Right cardiac atrium (tissue), 5 donors: ENCODE measurements at regions of chr9 and their contacts with region 1.

Region 1: DNA sequence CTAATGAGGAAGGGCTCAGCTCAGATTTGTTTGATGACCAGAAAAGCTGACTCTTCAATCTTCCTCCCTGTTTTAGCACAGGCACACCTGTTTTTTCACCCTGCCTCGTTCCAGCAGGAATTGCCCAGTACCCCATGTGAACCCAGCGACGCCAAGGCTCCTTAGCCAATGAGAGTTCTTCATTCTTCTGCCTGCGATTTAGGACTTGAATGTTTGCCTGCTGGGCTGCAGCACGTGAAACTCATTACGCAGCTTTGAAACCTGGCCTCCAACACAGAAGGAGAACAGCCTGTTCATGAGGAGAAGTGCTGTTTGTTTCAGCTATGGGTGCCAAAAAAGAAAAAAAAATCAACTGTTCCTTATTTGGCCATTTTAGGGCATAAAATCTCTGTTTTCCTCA is 315.5 kb downstream of the TRPM3 start:
- DNase-seq: no peak
- ATAC-seq: no peak
- H3K4me3 ChIP-seq: no peak overlapping the region
- H3K27ac ChIP-seq: no peak overlapping the region
- H3K4me1 ChIP-seq: no peaks in the 10 kb centered on the region
- H3K27me3 ChIP-seq: no peaks in the 10 kb centered on the region

Region 2: DNA sequence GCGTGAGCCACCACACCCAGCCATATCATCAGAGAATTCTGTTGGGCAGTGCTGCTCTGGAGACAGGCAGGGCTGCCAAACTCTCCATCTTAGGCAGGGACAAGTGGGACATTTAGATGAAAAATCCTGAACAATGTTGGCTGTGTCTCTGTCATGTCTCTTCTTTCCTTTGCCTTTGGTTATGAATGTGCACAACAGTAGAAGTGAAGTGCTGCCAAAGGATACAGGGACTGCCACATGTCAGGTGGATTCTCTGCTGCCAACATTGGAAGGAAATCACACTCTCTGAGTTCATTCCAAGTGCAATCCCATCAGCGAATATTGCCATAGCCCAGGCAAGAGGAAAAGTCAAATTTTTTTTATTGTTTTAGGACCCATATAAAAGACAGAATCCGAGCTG is 33.3 kb before region 1 on chr9:
- intact Hi-C with region 1: loop called in 1 of 4 experiments (anchors 5 kb)
- DNase-seq: no peak
- ATAC-seq: no peak
- H3K4me3 ChIP-seq: no peak overlapping the region
- H3K27ac ChIP-seq: no peak overlapping the region
- H3K4me1 ChIP-seq: no peaks in the 10 kb centered on the region
- H3K27me3 ChIP-seq: no peaks in the 10 kb centered on the region